Transverse colon (tissue), 4 donors: ENCODE measurements at regions of chr4 and their contacts with region 1.

Region 1: GRCh38 chr4:87235020-87235671 is 14.7 kb upstream of the KLHL8 start:
- DNase-seq: no peak
- H3K4me3 ChIP-seq: peak overlapping the region in 3 of 4 donors; percentile 29 to 49 (median 39)
- H3K27ac ChIP-seq: no peak overlapping the region
- H3K4me1 ChIP-seq: peaks cover 7 to 14% (median 9%) of the 10 kb centered on the region in 4 donors
- H3K27me3 ChIP-seq: no peaks in the 10 kb centered on the region
- CTCF ChIP-seq: no peak
- EP300 ChIP-seq: no peak
- POLR2A ChIP-seq: no peak

Region 2: DNA sequence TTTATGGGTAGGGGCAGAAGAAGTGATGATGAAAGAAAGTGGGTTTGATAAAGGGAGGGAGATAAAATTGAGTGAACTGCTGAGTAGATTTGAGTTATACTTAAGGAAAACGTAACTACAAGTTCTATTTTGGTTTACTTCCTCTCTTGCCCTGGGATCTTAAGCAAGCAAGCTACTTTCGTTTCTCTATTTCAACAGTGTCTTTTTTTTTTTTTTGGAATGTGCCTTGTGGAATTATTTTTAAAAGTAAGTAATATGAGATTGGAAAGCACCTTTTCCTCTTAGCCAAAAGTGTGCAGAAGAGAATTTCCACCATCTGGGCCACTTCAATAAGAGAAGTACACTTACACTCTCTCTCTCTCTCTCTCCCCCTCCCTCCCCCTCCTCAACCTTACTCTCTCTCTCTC is 326.9 kb before region 1 on chr4:
- in situ Hi-C with region 1: loop called in 3 of 4 experiments (anchors 25 kb)
- intact Hi-C with region 1: no loop called
- DNase-seq: no peak
- H3K4me3 ChIP-seq: no peak overlapping the region
- H3K27ac ChIP-seq: peak overlapping the region in 2 of 4 donors; percentile 19 to 54
- H3K4me1 ChIP-seq: peaks cover 0 to 24% (median 0%) of the 10 kb centered on the region in 4 donors
- H3K27me3 ChIP-seq: no peaks in the 10 kb centered on the region
- CTCF ChIP-seq: no peak
- EP300 ChIP-seq: no peak
- POLR2A ChIP-seq: no peak

Region 3: GRCh38 chr4:86927843-86928395 is 307.2 kb before region 1 on chr4:
- in situ Hi-C with region 1: loop called (anchors 10 to 25 kb)
- intact Hi-C with region 1: no loop called
- DNase-seq: peak; percentile 21
- H3K4me3 ChIP-seq: no peak overlapping the region
- H3K27ac ChIP-seq: peak overlapping the region in 1 of 4 donors; percentile 61
- H3K4me1 ChIP-seq: peaks cover 0 to 4% (median 0%) of the 10 kb centered on the region in 4 donors
- H3K27me3 ChIP-seq: no peaks in the 10 kb centered on the region
- CTCF ChIP-seq: no peak
- EP300 ChIP-seq: no peak
- POLR2A ChIP-seq: no peak

Region 4: DNA sequence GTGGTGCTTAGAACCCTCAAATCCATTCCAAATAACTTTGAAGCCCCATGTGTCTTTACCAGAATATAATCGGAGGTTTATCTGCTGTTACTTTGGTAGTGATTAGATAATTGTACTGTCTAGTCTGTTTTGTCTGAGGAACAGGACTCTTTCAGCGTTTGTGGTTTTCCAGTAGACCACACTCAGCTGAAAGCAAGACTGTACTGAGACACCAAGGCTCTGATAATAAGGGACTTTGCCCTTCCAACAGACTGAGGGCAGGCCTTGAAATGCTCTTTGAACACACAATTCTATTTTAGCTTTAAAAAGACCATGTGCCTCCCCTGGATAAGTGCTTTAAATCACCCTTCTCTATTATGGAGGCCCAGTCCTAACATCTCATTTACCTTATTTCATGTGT is 90.8 kb before region 1 on chr4:
- in situ Hi-C with region 1: loop called in 1 of 4 experiments (anchors 5 kb)
- intact Hi-C with region 1: no loop called
- DNase-seq: no peak
- H3K4me3 ChIP-seq: no peak overlapping the region
- H3K27ac ChIP-seq: peak overlapping the region in 1 of 4 donors; percentile 16
- H3K4me1 ChIP-seq: peaks cover 0 to 22% (median 8%) of the 10 kb centered on the region in 4 donors
- H3K27me3 ChIP-seq: no peaks in the 10 kb centered on the region
- CTCF ChIP-seq: no peak
- EP300 ChIP-seq: no peak
- POLR2A ChIP-seq: no peak

Region 5: GRCh38 chr4:87150498-87151261 is 84.5 kb before region 1 on chr4:
- in situ Hi-C with region 1: loop called (anchors 5 to 10 kb)
- intact Hi-C with region 1: loop called (anchors 5 kb)
- DNase-seq: peak; percentile 36
- H3K4me3 ChIP-seq: no peak overlapping the region
- H3K27ac ChIP-seq: peak overlapping the region in 1 of 4 donors; percentile 61
- H3K4me1 ChIP-seq: peaks cover 0 to 22% (median 15%) of the 10 kb centered on the region in 4 donors
- H3K27me3 ChIP-seq: no peaks in the 10 kb centered on the region
- CTCF ChIP-seq: peak; percentile 91 to 95 (median 94)
- EP300 ChIP-seq: no peak
- POLR2A ChIP-seq: no peak